Right ventricle myocardium inferior (tissue), 1 donor: ENCODE measurements at regions of chr15 and their contacts with region 1.

Region 1: DNA sequence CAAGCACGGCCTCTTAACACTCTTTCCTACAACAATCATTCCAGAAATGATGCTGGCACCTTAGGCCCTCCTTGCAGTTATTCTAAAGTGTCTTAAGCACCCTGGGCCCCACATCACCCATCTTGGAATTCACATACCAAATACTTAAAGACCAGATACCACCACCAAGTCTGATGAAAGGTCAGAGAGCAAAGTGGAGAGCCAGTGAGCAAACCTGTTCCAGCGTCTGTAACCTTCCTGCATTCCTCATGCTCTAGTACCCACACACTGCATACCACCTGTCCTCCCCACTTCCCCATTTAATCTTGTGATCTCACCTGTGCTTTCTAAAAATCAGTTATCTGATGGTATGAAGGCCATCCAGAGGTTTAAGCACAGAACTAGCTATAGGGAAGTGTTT is 7.0 kb upstream of the SPG11 start:
- DNase-seq: no peak
- ATAC-seq: no peak

Region 2: GRCh38 chr15:44654858-44655257 is 15.6 kb before region 1 on chr15:
- intact Hi-C with region 1: no loop called
- DNase-seq: no peak
- ATAC-seq: no peak

Region 3: DNA sequence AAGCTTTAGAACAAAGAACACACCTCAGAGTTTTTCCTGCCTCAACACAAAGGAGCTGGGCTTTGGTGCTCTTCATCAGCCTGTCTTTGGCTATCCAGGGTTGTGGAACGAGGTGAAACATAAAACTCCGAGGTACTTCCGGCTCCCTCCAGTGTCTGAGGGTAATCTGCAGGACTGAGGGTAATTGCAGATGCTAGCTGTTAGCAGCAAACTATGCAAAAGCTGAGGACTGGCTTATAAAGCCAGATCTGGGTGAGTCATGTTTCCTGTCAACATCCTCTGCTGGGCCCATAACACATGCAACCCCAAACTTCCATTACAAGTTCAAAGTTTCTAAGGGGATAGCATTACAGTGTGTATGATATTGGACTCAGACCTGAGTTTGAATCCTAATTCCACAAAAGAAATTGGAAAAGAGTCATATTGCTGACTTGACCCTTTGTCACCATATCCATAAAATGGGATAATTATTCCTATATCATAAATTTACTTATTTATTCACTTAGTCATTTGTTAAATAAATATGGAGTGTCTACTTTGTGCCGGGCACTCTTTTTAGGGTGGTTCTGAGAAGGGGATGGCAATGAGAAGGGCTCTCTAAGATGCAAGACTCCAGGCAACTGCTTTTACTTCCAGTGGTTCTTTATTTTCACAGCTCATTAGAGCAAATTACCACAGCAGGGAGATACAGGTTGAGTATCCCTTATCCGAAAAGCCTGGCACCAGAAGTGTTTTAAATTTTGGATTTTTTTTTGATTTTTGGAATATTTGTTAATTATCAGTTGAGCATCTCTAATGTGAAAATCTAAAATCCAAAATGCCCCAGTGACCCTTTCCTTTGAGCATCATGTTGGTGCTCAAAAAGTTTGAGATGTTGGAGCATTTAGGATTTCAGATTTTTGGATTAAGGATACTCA is 56.3 kb after region 1 on chr15:
- intact Hi-C with region 1: no loop called
- DNase-seq: no peak
- ATAC-seq: peak; percentile 9

Region 4: DNA sequence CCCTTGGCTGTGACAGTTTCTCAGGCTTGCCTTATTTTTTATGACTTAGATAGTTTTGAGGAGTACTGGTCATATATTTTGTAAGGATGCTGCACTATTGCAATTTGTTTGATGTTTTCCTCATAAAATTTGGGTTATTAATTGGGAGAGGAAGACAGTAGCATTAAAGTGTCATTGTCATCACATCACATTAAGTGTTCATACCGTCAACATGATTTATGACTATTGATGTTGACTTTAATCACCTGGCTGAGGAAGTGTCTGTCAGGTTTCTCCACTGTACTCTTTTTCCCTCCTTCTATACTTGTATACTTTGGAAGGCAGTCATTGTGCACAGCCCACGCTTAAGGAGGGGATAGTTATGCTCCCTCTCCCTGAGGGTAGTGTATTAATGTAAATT is 92.7 kb after region 1 on chr15:
- intact Hi-C with region 1: loop called (anchors 5 kb)
- DNase-seq: no peak
- ATAC-seq: no peak